ENCODE measurements at regions of chr17 and their contacts with region 1.

Region 1: GRCh38 chr17:81911277-81911961 is at the start of gene PCYT2:
- DNase-seq: peak; percentile 71
- H3K4me3 ChIP-seq: peak within 1 kb of the TSS; percentile 56 to 72 (median 67)
- H3K27ac ChIP-seq: no peak within 1 kb of the TSS
- H3K4me1 ChIP-seq: peaks cover 6% of the 10 kb centered on the region
- H3K27me3 ChIP-seq: no peaks in the 10 kb centered on the region
- CTCF ChIP-seq: no peak
- POLR2A ChIP-seq: peak; percentile 37
- total RNA-seq, gene PCYT2: 52.3 and 57.1 TPM in 2 replicates

Region 2: GRCh38 chr17:81733507-81734404 is 177.7 kb before region 1 on chr17:
- CTCF ChIA-PET with region 1: no interaction called
- POLR2A ChIA-PET with region 1: no interaction called
- dilution Hi-C with region 1: no loop called
- intact Hi-C with region 1: no loop called
- DNase-seq: peak; percentile 55
- H3K4me3 ChIP-seq: no peak overlapping the region
- H3K27ac ChIP-seq: no peak overlapping the region
- H3K4me1 ChIP-seq: no peaks in the 10 kb centered on the region
- H3K27me3 ChIP-seq: no peaks in the 10 kb centered on the region
- CTCF ChIP-seq: peak; percentile 92 to 93
- POLR2A ChIP-seq: no peak

Region 3: GRCh38 chr17:81871387-81872230 is 39.8 kb before region 1 on chr17:
- CTCF ChIA-PET with region 1: no interaction called
- POLR2A ChIA-PET with region 1: no interaction called
- dilution Hi-C with region 1: no loop called
- intact Hi-C with region 1: loop called (anchors 2 kb)
- DNase-seq: peak; percentile 81
- H3K4me3 ChIP-seq: peak overlapping the region; percentile 7 to 77 (median 50)
- H3K27ac ChIP-seq: peak overlapping the region; percentile 77
- H3K4me1 ChIP-seq: peaks cover 17% of the 10 kb centered on the region
- H3K27me3 ChIP-seq: no peaks in the 10 kb centered on the region
- CTCF ChIP-seq: peak; percentile 6 to 45
- POLR2A ChIP-seq: peak; percentile 29

Region 4: DNA sequence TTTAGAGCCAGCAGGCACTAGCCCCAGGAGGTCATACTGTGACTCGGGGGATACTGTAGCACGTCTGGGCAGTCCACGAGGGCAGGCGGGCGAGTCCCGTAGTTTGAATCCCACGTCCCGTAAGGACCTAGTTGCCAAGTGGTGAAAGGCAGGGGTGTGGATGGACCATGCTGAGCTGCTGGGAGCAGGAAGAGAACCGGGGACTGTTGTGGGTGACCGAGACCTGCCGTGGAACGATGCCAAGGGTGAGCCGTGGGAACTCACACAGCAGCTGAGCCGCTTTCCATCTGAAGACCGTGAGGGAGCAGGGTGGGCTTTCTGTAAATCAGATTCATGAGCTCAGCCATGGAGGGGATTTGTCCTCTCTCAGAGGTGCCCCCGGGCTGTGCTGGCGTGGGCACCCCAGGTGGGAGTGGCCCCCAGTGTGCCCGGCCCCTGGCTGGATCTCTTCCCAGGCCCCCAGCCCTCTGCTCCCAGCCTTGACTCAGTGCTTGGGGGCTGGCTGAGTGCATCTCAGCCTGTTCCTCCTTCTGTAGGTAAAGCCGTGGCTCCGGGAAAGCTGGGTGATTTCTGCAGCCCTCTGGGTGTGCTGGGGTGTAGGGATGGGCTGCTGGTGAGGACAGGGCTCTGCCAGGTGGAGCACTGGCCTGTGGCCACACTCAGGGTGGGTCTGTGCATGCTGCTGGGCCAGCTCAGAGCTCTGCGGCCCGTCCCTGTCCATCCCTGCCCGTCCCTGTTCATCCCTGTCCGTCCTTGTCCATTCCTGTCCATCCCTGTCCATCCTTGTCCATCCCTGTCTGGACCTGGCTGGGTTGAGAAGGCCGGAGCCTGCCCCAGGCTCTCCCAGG is 79.6 kb after region 1 on chr17:
- CTCF ChIA-PET with region 1: no interaction called
- POLR2A ChIA-PET with region 1: no interaction called
- dilution Hi-C with region 1: no loop called
- intact Hi-C with region 1: no loop called
- DNase-seq: no peak
- H3K4me3 ChIP-seq: no peak overlapping the region
- H3K27ac ChIP-seq: no peak overlapping the region
- H3K4me1 ChIP-seq: peaks cover 2% of the 10 kb centered on the region
- H3K27me3 ChIP-seq: no peaks in the 10 kb centered on the region
- CTCF ChIP-seq: no peak
- POLR2A ChIP-seq: no peak